ENCODE measurements at regions of chrX and their contacts with region 1.

Region 1: DNA sequence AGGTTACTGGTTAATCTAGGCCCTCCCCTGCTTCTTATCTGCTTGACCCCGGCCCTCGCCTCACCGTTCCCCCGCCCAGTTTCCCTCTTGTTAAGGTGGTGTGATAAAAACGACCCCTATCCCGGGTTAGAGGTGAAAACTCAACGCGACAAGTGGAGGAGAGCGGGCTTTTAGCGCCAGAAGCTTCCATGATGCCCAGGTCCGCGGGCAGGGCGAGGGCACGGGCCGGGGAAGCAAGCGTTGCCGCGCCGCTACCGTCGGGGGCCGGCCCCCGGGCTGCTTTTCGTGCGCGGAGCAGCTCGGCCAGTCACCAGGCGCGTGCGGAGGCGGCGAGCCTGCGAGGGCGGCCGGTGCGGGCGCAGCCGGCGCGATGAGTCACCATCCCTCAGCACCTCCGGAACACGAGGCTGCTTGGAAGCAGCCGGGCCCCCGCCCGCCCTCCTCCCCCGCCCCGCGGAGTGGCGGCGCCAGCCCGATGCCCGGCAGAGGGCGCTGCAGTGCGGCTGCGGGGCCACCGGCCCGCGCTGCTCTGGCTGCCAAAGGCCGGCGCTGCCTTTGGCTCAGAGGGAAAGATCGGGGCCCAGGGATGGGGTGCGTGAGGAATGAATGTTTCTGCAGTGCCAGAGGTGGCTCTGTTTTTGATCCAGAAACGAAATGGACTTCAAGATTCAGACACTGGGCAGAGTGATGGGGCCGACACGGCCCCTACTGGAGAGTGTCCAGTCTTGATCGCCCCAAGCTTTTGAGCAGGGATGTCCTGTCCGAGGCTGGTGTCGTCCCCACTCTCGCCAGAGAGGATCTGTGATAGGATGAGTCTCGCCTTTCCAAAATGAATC is 107.8 kb downstream of the NHSL2 start:
- DNase-seq: peak; percentile 41 to 83 (median 69)
- ATAC-seq: peak; percentile 98
- H3K4me3 ChIP-seq: peak overlapping the region; percentile 24
- H3K4me3 Mint-ChIP-seq: peak overlapping the region in 6 of 10 donors; percentile 17 to 51 (median 20)
- H3K27ac ChIP-seq: no peak overlapping the region
- H3K27ac Mint-ChIP-seq: no peak overlapping the region
- H3K4me1 ChIP-seq: peaks cover 0 to 5% of the 10 kb centered on the region in 2 donors
- H3K4me1 Mint-ChIP-seq: peaks cover 0 to 14% (median 0%) of the 10 kb centered on the region in 7 donors
- H3K27me3 ChIP-seq: no peaks in the 10 kb centered on the region
- H3K27me3 Mint-ChIP-seq: peaks cover 2 to 70% (median 3%) of the 10 kb centered on the region in 5 donors

Region 2: GRCh38 chrX:72100824-72101351 is 82.4 kb after region 1 on chrX:
- CTCF ChIA-PET with region 1: interaction called, 3 read pairs
- POLR2A ChIA-PET with region 1: no interaction called
- intact Hi-C with region 1: loop called (anchors 1 to 2 kb)
- DNase-seq: peak; percentile 24 to 78 (median 67)
- ATAC-seq: peak; percentile 84
- H3K4me3 ChIP-seq: peak overlapping the region; percentile 59
- H3K4me3 Mint-ChIP-seq: peak overlapping the region; percentile 25 to 81 (median 64)
- H3K27ac ChIP-seq: no peak overlapping the region
- H3K27ac Mint-ChIP-seq: peak overlapping the region in 6 of 9 donors; percentile 14 to 82 (median 58)
- H3K4me1 ChIP-seq: peaks cover 29 to 50% of the 10 kb centered on the region in 2 donors
- H3K4me1 Mint-ChIP-seq: peaks cover 10 to 39% (median 33%) of the 10 kb centered on the region in 7 donors
- H3K27me3 ChIP-seq: no peaks in the 10 kb centered on the region
- H3K27me3 Mint-ChIP-seq: peaks cover 6 to 60% (median 12%) of the 10 kb centered on the region in 5 donors

Region 3: GRCh38 chrX:72169008-72169728 is 150.7 kb after region 1 on chrX:
- CTCF ChIA-PET with region 1: no interaction called
- POLR2A ChIA-PET with region 1: no interaction called
- intact Hi-C with region 1: no loop called
- DNase-seq: peak in 7 of 9 donors; percentile 52 to 71 (median 58)
- ATAC-seq: peak; percentile 94
- H3K4me3 ChIP-seq: peak overlapping the region; percentile 28
- H3K4me3 Mint-ChIP-seq: peak overlapping the region; percentile 46 to 89 (median 84)
- H3K27ac ChIP-seq: peak overlapping the region; percentile 66
- H3K27ac Mint-ChIP-seq: peak overlapping the region; percentile 87 to 97 (median 90)
- H3K4me1 ChIP-seq: no peaks in the 10 kb centered on the region
- H3K4me1 Mint-ChIP-seq: peaks cover 0 to 10% (median 5%) of the 10 kb centered on the region in 7 donors
- H3K27me3 ChIP-seq: no peaks in the 10 kb centered on the region
- H3K27me3 Mint-ChIP-seq: peaks cover 0 to 5% (median 0%) of the 10 kb centered on the region in 5 donors

Region 4: DNA sequence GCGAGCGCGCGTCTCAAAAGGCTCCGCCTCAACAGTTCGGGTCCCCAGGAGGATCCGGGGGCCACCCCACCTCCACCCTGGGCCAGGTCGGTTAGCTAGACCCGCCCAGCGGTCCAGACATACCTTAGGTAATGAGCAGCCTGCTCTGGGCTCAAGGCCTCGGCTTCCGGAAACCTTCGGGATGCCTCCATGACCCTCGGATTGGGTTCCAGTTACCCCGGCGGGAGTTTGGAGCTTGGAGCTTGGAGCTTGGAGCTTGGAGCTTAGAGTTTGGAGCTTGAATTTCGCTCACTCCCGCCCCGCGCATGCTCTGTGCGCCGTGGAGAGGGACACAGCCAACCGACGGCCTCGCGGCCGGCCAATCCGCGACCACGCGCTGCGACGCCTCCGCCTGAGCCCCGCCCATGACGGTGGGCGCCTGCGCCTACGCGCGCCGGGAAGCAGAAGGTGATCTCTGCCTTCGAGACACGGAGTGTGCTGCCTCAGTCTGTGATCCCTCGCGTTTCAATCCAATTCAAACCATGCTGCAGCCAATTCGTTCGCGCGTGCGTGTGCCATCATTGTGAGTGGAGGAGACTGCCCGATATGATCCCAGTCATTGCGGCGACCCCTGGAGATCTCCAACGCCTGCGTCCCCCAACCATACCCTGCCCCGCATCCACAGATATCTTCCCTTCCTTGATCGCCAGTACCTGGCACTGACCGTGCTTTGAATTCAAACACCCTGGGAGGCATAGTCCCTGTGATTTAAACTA is 220.4 kb after region 1 on chrX and contains the start of gene ERCC6L:
- CTCF ChIA-PET with region 1: no interaction called
- POLR2A ChIA-PET with region 1: interaction called, 3 read pairs
- intact Hi-C with region 1: loop called in 1 of 2 experiments (anchors 2 kb)
- DNase-seq: peak; percentile 71 to 87 (median 81)
- ATAC-seq: peak; percentile 99
- H3K4me3 ChIP-seq: peak within 1 kb of the TSS; percentile 62
- H3K4me3 Mint-ChIP-seq: peak within 1 kb of the TSS; percentile 45 to 87 (median 76)
- H3K27ac ChIP-seq: peak within 1 kb of the TSS; percentile 47
- H3K27ac Mint-ChIP-seq: peak within 1 kb of the TSS in 7 of 9 donors; percentile 48 to 91 (median 56)
- H3K4me1 ChIP-seq: no peaks in the 10 kb centered on the region
- H3K4me1 Mint-ChIP-seq: peaks cover 0 to 17% (median 0%) of the 10 kb centered on the region in 7 donors
- H3K27me3 ChIP-seq: no peaks in the 10 kb centered on the region
- H3K27me3 Mint-ChIP-seq: no peaks in the 10 kb centered on the region
- total RNA-seq, gene ERCC6L: 0.11 to 6.6 (median 0.16) TPM

Measured in naive thymus-derived CD4-positive, alpha-beta T cell (primary cell).